H1 (cell line): ENCODE measurements at regions of chr18 and their contacts with region 1.

Region 1: GRCh38 chr18:27298214-27298804 is 113.2 kb upstream of the CHST9 start:
- DNase-seq: no peak
- H3K4me3 ChIP-seq: no peak overlapping the region
- H3K27ac ChIP-seq: no peak overlapping the region
- H3K4me1 ChIP-seq: peaks cover 0 to 2% (median 0%) of the 10 kb centered on the region in 4 experiments; a peak in 1 of 7 replicates
- H3K27me3 ChIP-seq: no peaks in the 10 kb centered on the region
- CTCF ChIP-seq: peak in 2 of 3 experiments; percentile 47 to 52; a peak in 2 of 4 replicates
- EP300 ChIP-seq: no peak
- POLR2A ChIP-seq: no peak
- RAD21 ChIP-seq: peak; percentile 82 to 90

Region 2: GRCh38 chr18:27005589-27005988 is 292.7 kb before region 1 on chr18:
- CTCF ChIA-PET with region 1: interaction called, 16 read pairs
- POLR2A ChIA-PET with region 1: no interaction called
- DNase-seq: no peak
- H3K4me3 ChIP-seq: no peak overlapping the region
- H3K27ac ChIP-seq: no peak overlapping the region
- H3K4me1 ChIP-seq: no peaks in the 10 kb centered on the region
- H3K27me3 ChIP-seq: no peaks in the 10 kb centered on the region
- CTCF ChIP-seq: peak; percentile 41 to 69 (median 49)
- EP300 ChIP-seq: no peak
- POLR2A ChIP-seq: no peak
- RAD21 ChIP-seq: peak; percentile 69 to 78

Region 3: DNA sequence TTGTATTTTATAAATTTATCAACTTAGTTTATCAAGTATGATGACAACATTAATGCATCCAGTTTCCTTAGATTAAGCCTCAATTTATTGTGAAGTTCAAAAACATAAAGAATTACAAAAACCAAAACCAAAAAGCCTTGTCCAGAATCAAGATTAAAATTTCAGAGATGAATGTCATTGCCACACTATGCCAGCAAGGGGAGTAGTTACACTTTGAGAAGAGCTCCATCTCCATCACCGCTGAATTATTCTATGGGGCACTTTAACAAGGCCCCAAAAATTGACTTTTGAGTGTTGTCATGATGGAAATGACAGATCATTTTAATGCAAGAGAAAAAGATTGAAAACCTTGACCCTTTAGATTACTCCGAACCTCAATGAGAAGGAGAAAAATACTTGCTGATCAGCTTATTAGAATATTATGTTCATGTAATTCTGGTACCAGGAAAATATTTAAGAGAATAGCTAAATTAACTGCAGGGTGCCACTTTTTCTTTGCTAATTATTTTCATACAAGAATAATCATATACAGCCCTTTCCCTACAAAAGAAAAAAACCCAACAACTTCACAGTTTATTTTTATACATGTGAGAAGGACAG is 280.3 kb before region 1 on chr18:
- CTCF ChIA-PET with region 1: interaction called, 24 read pairs
- POLR2A ChIA-PET with region 1: no interaction called
- DNase-seq: no peak
- H3K4me3 ChIP-seq: no peak overlapping the region
- H3K27ac ChIP-seq: no peak overlapping the region
- H3K4me1 ChIP-seq: 0 out of 7 replicates have a peak, but pooled peaks cover 0 to 2% (median 0%) of the 10 kb centered on the region in 4 experiments
- H3K27me3 ChIP-seq: no peaks in the 10 kb centered on the region
- CTCF ChIP-seq: peak in 2 of 3 experiments; percentile 66 to 67; a peak in 3 of 4 replicates
- EP300 ChIP-seq: no peak
- POLR2A ChIP-seq: no peak
- RAD21 ChIP-seq: peak; percentile 93 to 94